Endothelial cell of umbilical vein (primary cell): ENCODE measurements at regions of chr2 and their contacts with region 1.

Region 1: DNA sequence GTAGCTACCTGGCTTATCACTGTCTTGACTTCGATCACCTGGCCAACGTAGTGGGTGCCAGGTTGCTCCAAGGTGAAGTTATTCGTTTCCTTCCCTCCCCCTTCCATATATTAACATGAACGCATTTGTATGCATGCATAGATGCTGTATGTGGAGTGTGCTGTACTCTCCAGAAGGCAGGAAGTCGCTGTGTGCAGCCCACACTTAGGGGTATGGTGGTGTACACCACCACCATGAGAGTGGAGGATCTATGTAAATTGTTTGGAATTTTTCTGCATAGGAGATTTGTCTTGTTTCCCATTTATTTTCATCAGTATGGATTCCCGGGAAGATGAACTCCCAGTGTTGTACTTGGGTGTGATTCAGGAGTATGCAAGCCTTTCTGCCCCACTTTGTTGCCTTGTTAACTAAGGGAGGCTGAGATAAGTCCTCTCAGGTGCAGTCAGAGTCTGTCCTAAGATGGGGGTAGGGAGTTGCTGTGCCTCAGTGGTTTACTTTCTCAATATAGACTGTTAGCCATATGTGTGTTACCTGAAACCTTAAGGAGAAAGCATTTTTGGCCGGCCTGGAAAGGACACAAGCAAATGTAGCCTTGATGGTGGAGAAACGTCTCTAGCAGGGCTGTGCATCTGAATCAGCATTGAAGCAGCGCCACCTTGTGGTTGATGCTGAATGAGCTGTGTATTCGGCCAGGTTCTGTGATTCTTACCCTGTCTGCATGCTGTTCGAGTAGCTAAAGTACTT is 149.8 kb downstream of the TANC1 start:
- DNase-seq: peak; percentile 88
- H3K4me3 ChIP-seq: no peak overlapping the region
- H3K27ac ChIP-seq: peak overlapping the region; percentile 21
- H3K4me1 ChIP-seq: peaks cover 18% of the 10 kb centered on the region
- H3K27me3 ChIP-seq: no peaks in the 10 kb centered on the region
- CTCF ChIP-seq: peak; percentile 84 to 85
- POLR2A ChIP-seq: no peak

Region 2: DNA sequence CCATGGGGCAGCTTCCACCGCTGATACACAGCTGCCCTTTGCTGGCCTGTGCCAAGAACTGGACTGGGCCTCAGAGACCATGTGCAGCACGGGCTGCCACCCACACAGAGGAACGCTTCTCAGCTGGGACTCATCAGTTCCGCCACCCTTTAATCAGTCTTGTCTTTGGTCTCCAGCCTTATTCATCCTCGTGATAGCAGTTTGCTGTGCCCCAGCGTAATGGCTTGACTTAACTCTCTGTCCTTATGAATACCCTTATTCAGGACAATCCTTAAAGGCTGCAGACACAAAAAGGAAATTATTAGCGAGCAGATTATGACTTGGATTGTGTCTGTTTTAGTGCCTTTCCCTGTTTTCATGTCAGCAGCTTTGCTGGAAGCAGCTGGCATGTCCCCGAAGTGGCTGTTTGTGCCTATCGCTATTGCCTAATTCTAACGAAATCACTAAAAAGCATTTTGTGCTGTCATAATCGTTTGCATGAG is 432.0 kb before region 1 on chr2:
- CTCF ChIA-PET with region 1: no interaction called
- POLR2A ChIA-PET with region 1: no interaction called
- dilution Hi-C with region 1: no loop called
- intact Hi-C with region 1: no loop called
- DNase-seq: no peak
- H3K4me3 ChIP-seq: no peak overlapping the region
- H3K27ac ChIP-seq: no peak overlapping the region
- H3K4me1 ChIP-seq: no peaks in the 10 kb centered on the region
- H3K27me3 ChIP-seq: no peaks in the 10 kb centered on the region
- CTCF ChIP-seq: no peak
- POLR2A ChIP-seq: no peak

Region 3: GRCh38 chr2:158745044-158745865 is 373.0 kb before region 1 on chr2:
- CTCF ChIA-PET with region 1: no interaction called
- POLR2A ChIA-PET with region 1: no interaction called
- dilution Hi-C with region 1: no loop called
- intact Hi-C with region 1: no loop called
- DNase-seq: peak; percentile 80
- H3K4me3 ChIP-seq: no peak overlapping the region
- H3K27ac ChIP-seq: no peak overlapping the region
- H3K4me1 ChIP-seq: peaks cover 3% of the 10 kb centered on the region
- H3K27me3 ChIP-seq: peaks cover 23 to 28% of the 10 kb centered on the region in 2 experiments
- CTCF ChIP-seq: peak; percentile 46 to 53
- POLR2A ChIP-seq: no peak

Region 4: GRCh38 chr2:158936978-158937377 is 181.3 kb before region 1 on chr2:
- CTCF ChIA-PET with region 1: interaction called, 6 read pairs
- POLR2A ChIA-PET with region 1: no interaction called
- dilution Hi-C with region 1: no loop called
- intact Hi-C with region 1: loop called (anchors 1 kb)
- DNase-seq: peak; percentile 99
- H3K4me3 ChIP-seq: no peak overlapping the region
- H3K27ac ChIP-seq: peak overlapping the region; percentile 87
- H3K4me1 ChIP-seq: peaks cover 18% of the 10 kb centered on the region
- H3K27me3 ChIP-seq: no peaks in the 10 kb centered on the region
- CTCF ChIP-seq: no peak
- POLR2A ChIP-seq: no peak

Region 5: GRCh38 chr2:158998551-158999248 is 119.6 kb before region 1 on chr2:
- CTCF ChIA-PET with region 1: interaction called, 13 read pairs
- POLR2A ChIA-PET with region 1: no interaction called
- dilution Hi-C with region 1: no loop called
- intact Hi-C with region 1: no loop called
- DNase-seq: peak; percentile 86
- H3K4me3 ChIP-seq: peak overlapping the region in 1 of 3 experiments; percentile 42
- H3K27ac ChIP-seq: peak overlapping the region; percentile 87
- H3K4me1 ChIP-seq: peaks cover 41% of the 10 kb centered on the region
- H3K27me3 ChIP-seq: no peaks in the 10 kb centered on the region
- CTCF ChIP-seq: no peak
- POLR2A ChIP-seq: peak; percentile 32

Region 6: DNA sequence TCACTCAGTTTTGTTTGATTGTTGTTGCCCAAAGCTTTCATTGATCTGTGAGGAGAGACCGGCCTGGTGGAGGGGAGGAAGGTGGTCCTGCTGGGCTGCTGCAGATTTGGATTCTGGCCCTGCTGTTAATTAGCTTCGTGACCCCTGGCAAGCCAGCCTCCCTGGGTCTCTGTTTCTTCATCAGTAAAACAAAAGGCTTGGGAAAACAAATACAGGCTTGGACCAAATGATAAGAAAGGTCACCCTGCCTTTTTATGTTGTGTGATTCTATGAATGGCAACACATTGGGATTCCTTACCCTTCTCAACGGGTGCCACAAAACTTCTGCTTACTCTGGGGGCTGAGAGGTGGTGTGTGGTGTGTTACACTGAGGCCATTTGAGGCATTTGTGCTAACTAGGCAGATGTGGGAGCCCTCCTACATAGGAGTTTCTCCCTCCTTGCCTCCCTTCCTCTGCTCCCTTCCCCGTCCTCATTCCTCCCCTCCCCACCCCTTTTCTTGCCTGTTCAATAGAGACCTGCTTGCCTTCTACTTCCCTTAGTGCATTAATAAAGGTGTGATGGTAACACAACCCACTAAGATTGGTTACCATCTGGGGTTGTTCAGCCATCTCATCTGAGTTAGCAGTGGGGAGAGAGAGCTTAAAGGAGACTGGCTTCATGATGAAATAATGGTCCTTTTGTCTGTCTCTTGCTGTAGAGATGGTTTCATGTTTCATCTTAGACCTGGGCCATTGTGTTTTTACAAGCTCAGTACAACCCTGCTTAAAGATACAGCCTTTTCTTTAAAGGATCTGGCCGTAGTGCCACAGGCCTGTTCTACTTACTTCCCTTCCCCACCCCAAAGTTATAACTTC is 53.6 kb before region 1 on chr2:
- CTCF ChIA-PET with region 1: interaction called, 11 read pairs
- POLR2A ChIA-PET with region 1: no interaction called
- dilution Hi-C with region 1: no loop called
- intact Hi-C with region 1: no loop called
- DNase-seq: peak; percentile 94
- H3K4me3 ChIP-seq: no peak overlapping the region
- H3K27ac ChIP-seq: peak overlapping the region; percentile 54
- H3K4me1 ChIP-seq: peaks cover 42% of the 10 kb centered on the region
- H3K27me3 ChIP-seq: no peaks in the 10 kb centered on the region
- CTCF ChIP-seq: no peak
- POLR2A ChIP-seq: peak; percentile 26

Region 7: DNA sequence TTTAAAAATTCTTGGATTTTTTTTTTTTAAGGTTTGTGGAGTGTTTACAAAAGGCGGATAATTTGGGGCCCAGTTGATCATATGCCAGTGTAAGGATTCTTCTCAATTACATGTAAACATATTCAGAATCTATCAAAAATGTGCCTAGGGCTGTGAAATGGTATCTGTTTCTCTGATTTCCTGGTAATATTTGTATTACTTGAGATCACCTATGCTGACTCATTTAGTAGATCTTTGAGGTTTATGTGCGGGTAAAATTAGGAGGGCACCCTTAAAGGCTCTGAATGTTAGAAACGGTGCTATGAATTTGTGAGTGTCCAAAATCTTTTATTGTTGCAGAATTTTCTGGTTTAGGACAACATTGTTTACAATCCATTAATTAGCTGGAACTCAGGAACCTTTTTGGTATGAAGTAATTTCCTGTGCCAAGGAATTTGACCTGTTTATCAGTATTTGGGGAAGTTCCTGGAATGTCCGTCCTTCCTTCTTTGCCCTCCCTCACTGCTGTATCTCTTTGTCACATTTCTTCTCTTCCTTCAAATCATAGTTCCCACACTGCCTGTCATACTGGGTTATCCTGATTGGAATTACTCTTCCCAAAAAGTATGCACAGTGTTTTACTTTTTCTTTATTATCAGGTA is 19.4 kb before region 1 on chr2:
- CTCF ChIA-PET with region 1: interaction called, 24 read pairs
- POLR2A ChIA-PET with region 1: interaction called, 4 read pairs
- dilution Hi-C with region 1: no loop called
- intact Hi-C with region 1: loop called (anchors 1 kb)
- DNase-seq: peak; percentile 81
- H3K4me3 ChIP-seq: peak overlapping the region in 1 of 3 experiments; percentile 44
- H3K27ac ChIP-seq: peak overlapping the region; percentile 92
- H3K4me1 ChIP-seq: peaks cover 55% of the 10 kb centered on the region
- H3K27me3 ChIP-seq: no peaks in the 10 kb centered on the region
- CTCF ChIP-seq: no peak
- POLR2A ChIP-seq: peak; percentile 64

Region 8: DNA sequence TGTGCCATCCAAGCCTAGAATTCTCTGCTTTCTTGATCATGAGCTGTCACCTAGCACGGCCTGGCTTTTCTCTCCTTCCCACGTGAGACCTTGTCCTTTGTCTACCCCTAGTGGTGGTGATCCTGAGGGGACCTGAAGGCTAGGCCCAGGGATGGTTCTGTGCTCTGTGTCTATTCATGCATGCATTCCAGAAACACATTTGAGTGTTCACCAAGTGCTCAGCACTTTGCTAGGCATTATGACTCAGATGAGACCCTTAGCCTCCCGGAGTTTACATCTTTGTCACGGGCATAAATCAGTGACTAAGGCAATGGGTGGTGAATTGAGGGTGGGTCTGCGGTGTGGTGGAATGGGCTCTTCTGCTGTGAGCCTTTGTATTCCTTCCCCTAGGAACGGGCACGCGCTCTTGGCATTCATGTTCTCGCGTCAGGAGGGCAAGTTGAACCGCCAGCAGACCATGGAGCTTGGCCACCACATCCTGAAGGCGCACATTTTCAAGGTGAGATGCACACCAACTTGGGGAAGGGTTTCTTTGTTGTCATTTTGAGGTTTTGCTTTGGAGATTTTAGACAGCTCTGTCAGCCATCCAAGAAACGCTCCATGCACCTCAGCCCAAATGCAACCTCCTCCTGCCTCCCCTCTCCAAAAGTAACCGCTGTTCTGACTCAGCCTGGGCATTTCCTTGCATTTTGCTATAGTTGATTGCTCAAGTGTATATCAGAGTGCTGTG is 67.3 kb after region 1 on chr2:
- CTCF ChIA-PET with region 1: interaction called, 11 read pairs
- POLR2A ChIA-PET with region 1: no interaction called
- dilution Hi-C with region 1: no loop called
- intact Hi-C with region 1: no loop called
- DNase-seq: peak; percentile 44
- H3K4me3 ChIP-seq: no peak overlapping the region
- H3K27ac ChIP-seq: no peak overlapping the region
- H3K4me1 ChIP-seq: peaks cover 42% of the 10 kb centered on the region
- H3K27me3 ChIP-seq: no peaks in the 10 kb centered on the region
- CTCF ChIP-seq: peak; percentile 43 to 47
- POLR2A ChIP-seq: no peak

Region 9: DNA sequence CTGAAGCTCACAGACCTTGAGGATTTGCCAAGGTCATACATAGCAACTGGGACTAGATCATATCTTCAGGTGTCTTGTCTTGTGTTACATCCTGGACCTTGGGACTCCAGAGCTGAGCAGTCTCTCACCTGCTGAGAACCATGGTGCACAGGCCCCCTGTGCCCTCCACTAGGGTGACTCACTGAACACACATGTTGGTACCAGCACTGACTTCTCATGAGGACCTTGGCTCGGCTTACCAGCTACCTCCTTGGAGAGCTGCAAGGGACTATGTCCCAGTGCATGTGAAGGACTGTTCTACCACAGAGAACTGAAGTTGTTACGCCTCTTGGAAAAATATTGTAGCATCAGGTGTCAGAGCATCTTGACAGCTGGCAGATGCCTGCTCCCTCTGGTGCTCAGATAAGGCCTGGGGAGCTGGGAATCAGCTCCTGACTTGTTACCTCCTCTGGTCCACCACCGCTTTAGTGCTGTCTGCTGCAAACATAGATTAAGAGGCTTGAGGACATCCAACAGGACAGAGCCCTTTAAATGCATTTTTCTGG is 96.1 kb after region 1 on chr2:
- CTCF ChIA-PET with region 1: no interaction called
- POLR2A ChIA-PET with region 1: no interaction called
- dilution Hi-C with region 1: no loop called
- intact Hi-C with region 1: no loop called
- DNase-seq: no peak
- H3K4me3 ChIP-seq: no peak overlapping the region
- H3K27ac ChIP-seq: no peak overlapping the region
- H3K4me1 ChIP-seq: no peaks in the 10 kb centered on the region
- H3K27me3 ChIP-seq: no peaks in the 10 kb centered on the region
- CTCF ChIP-seq: no peak
- POLR2A ChIP-seq: no peak

Region 10: DNA sequence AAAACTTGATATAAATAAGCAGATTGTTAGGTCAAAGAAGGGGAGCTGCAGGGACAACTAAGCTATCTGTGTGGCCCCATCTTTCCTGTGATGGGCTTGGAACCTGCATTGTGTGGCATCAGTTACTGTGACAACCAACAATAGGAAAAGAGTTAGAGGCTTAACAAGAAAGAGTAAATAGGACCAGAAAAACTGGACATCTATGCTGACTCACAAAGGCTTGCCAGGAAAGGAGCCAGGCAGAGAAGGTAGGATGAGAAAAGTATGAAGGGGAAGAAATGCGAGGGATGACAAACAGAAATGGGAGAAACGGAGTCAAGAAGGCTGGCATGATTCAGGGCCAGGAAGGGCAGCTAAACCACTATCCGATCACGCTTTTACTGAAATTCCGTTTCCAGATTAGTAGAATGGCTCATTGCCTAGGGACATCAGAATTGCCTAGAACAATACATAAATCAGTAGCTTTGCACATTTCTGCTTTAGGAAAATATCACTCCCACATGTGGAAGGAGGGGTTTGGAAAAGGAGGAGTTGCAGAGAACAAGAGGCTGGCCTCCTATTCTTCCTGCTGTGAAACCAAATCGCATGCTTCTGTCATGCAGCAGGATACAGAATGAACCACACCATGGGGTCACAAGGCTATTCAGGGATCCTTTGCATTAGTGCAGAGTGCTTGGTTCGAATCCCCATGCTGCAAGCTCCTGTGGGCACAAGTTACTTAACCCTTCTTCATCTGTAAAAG is 936.9 kb after region 1 on chr2:
- CTCF ChIA-PET with region 1: no interaction called
- POLR2A ChIA-PET with region 1: no interaction called
- dilution Hi-C with region 1: no loop called
- intact Hi-C with region 1: no loop called
- DNase-seq: peak; percentile 64
- H3K4me3 ChIP-seq: no peak overlapping the region
- H3K27ac ChIP-seq: no peak overlapping the region
- H3K4me1 ChIP-seq: peaks cover 25% of the 10 kb centered on the region
- H3K27me3 ChIP-seq: no peaks in the 10 kb centered on the region
- CTCF ChIP-seq: no peak
- POLR2A ChIP-seq: no peak